Dendritic cell treated with granulocyte-macrophage colony-stimulating factor and Interleukin-4, amounts not matched to agents 40 ng/mL and 50 ng/mL, for 4 days (primary cell): ENCODE measurements at regions of chr19 and their contacts with region 1.

Region 1: DNA sequence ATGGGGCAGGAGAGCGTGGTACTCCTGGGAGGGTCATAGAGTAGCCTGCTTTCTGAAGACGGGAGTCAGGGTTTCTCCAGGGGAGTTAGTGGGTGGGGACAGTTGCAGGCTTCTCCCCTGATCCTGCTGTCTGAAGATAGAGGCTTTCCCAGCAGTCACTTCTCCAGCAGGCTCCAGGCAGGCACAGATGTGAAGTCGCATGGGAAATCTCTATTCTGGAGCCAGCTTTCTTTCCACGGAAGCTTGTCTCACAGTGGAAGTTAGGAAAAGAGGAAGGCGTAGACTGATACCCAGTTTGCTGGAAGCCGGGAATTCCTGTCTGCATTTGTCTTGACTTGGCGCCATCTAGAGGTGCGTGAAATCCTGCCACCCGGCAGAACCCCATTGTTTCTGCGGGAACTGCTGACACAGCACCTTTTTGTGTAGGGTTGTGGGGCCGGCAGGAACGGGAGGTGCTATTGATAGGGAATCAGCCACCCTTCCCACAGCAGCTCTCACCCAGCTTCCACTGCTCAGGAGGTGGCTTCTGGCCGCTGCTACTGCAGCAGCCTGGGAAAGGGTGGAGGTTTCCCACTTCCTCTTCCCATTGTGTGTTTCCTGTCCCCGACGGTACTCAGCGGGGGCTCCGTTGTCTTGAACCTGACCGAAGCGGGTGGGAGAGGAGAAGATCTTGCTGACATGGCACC is 28.5 kb upstream of the NPAS1 start:
- H3K4me3 Mint-ChIP-seq: no peak overlapping the region
- H3K27ac Mint-ChIP-seq: no peak overlapping the region
- H3K4me1 Mint-ChIP-seq: peaks cover 18% of the 10 kb centered on the region
- H3K27me3 Mint-ChIP-seq: no peaks in the 10 kb centered on the region

Region 2: DNA sequence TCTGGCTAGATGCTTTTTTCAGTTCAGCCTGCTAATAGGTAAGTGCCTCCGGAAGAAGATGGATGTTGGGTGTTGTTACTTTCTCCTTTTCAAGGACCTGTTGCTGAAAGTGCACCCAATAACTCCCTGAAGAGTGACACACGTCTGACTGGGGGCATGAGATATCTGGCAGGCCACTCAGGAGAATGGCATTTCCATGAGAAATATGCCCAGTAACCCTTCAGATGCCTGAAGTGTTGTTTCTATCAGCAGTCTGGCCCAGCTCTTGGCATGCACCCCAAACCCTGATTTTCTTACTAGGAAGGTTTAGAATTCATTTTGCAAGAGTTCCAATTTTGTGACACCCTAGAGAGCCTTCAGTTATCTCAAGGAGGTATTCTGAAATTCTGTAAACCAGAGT is 58.8 kb before region 1 on chr19:
- intact Hi-C with region 1: loop called (anchors 10 kb)
- H3K4me3 Mint-ChIP-seq: no peak overlapping the region
- H3K27ac Mint-ChIP-seq: no peak overlapping the region
- H3K4me1 Mint-ChIP-seq: peaks cover 15% of the 10 kb centered on the region
- H3K27me3 Mint-ChIP-seq: no peaks in the 10 kb centered on the region